ENCODE measurements at regions of chr1 and their contacts with region 1.

Region 1: DNA sequence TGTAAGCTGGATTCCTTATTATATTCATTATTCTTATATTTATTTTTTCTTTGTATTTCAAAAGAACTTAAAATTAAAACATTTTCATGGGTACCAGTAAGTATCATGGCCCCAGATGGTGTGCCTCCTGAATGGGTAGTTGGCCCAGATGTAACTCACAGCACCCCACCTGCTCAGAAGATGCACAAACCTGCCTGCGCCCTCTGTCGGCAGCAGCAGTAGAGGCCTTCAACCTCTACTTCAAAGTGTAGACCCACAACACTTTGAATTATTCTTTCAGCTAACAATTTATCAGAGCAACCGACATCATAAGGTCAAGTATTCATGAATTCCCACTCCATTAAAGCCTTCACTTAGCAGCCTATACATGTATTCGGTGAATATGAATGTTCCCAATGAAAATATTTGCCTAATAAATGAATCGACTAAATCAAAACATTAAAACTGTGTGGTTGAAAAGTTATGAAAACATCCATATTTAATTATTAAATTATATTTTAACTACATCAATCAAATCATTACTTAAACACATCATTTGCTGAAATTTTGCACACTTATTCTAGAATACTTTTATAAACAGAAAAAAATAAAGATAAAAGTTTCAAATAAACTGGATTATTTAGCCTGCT is 25.4 kb downstream of the PIGM start:
- DNase-seq: no peak
- H3K4me3 ChIP-seq: no peak overlapping the region
- CTCF ChIP-seq: peak; percentile 94

Region 2: DNA sequence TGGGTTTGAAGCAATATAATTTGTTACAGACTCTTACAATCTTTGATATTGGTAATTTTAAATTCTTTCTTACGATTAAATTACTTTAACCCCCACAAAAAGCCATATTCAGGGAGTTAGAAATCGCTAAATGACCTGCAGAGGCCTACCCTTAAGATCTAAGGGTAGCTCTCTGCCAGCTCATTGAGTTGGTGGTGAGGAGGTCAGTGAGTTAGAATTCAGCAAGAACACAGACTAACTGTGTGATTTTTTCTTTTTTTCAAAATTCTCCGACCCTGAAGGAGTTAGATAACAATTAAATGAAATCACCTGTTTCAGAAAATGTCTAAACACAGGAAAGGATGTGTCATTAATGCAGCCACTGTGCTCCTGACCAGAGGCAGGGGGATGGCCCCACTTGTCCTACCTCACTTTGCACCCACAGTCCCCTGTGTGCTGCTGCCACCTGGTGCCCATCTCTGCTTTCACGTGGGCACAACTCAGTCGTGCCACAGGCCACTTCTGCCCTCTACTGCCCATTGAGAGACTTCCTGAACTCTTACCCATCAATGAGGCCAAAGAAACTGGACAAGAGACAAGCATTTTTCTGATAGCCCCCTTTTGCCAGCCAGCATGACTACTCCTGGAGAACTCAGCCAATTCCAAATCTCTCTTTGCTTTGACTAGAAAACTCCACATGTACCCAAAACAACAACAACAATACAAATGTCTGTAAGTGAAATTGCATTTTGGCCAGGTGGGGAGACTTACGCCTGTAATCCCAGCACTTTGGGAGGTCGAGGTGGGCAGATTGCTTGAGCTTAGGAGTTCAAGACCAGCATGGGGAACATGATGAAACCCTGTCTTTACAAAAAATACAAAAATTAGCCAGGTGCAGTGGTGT is 114.9 kb before region 1 on chr1:
- CTCF ChIA-PET with region 1: interaction called, 206 read pairs
- POLR2A ChIA-PET with region 1: no interaction called
- DNase-seq: peak; percentile 58
- H3K4me3 ChIP-seq: no peak overlapping the region
- CTCF ChIP-seq: peak; percentile 99

Region 3: DNA sequence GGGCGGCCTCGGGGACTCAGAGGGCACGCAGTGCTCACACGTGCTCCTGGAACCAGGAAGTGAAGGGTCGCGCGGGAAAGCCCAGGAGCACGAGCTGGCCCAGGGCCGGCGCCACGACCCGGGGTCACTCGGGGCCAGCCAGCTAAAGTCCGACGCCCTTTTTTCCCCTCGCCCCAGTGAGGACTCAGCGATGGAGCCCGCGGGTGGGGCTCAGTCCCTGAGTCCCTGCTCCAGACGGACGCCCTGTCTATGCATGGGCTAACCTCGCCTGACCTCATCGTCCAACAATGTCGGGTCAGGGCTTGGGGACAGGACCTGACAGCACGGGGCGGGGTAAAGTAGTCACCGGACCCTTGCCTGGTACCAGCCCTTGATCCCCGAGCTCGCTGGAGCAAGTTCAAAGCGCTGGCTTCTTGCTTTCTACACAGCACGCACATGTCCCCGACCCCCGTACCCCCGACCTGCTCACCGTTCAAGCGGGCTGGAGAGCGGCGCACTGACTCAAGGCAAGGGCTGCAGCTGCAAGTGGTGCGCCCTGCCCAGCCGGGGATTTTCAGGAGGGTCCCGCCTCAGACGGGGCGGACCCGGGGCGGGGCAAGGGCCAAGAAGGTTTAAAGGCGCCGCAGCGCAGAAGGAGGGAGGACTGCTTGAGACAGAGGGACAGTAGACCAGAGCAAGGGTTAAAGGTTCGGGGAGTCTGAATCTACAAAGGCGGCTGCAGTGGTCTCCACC is 81.3 kb before region 1 on chr1 and contains the start of gene TAGLN2:
- CTCF ChIA-PET with region 1: interaction called, 1,031 read pairs
- POLR2A ChIA-PET with region 1: no interaction called
- DNase-seq: no peak
- H3K4me3 ChIP-seq: peak within 1 kb of the TSS; percentile 99
- CTCF ChIP-seq: no peak

Region 4: DNA sequence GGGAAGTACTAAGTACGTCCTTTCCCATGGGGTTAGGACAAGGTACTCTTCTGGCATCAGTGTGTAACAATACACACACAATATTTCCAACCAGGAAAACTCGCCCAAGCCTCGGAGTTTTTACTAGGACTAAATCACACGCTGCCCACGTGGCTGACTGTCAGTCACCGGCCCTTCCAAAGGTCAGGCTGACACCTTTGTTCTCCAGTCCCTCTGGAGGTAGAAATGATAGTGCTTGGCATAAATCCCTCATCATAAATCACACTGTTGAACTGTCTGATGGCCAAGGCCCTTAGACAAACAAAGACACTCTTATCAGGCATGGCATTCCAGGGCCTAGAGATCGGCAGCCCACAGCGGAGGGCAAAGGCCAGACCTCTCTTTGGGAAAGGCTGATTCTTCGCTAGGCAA is 35.5 kb before region 1 on chr1:
- CTCF ChIA-PET with region 1: interaction called, 57 read pairs
- POLR2A ChIA-PET with region 1: no interaction called
- DNase-seq: no peak
- H3K4me3 ChIP-seq: no peak overlapping the region
- CTCF ChIP-seq: no peak

Region 5: DNA sequence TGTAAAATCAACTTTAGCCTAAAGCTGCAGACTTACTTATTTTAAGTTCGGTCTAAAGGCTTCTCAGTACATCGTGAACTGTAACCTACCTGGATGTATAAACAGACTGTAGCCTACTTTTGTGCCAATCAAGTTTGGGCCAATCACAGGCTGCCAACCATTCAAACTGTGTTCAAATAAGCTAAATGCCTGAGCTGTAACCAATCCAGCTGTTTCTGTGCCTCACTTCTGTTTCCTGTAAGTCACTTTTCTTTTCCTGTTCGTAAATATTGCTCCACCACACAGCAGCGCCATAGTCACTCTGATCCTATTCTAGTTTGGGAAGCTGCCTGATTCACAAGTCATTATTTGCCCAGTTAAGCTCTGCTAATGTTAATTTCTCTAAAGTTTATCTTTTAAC is 14.9 kb before region 1 on chr1:
- CTCF ChIA-PET with region 1: interaction called, 164 read pairs
- POLR2A ChIA-PET with region 1: no interaction called
- DNase-seq: no peak
- H3K4me3 ChIP-seq: no peak overlapping the region
- CTCF ChIP-seq: no peak

Region 6: GRCh38 chr1:160078512-160079195 is 72.2 kb after region 1 on chr1:
- CTCF ChIA-PET with region 1: interaction called, 18 read pairs
- POLR2A ChIA-PET with region 1: no interaction called
- DNase-seq: no peak
- H3K4me3 ChIP-seq: no peak overlapping the region
- CTCF ChIP-seq: peak; percentile 77